Endothelial cell of umbilical vein (primary cell): ENCODE measurements at regions of chr1 and their contacts with region 1.

Region 1: GRCh38 chr1:178542560-178543356 is 29.8 kb downstream of the TEX35 start:
- DNase-seq: peak; percentile 89
- H3K4me3 ChIP-seq: peak overlapping the region; percentile 48 to 77 (median 53)
- H3K27ac ChIP-seq: no peak overlapping the region
- H3K4me1 ChIP-seq: peaks cover 11% of the 10 kb centered on the region
- H3K27me3 ChIP-seq: no peaks in the 10 kb centered on the region
- CTCF ChIP-seq: peak; percentile 83 to 89
- POLR2A ChIP-seq: no peak

Region 2: DNA sequence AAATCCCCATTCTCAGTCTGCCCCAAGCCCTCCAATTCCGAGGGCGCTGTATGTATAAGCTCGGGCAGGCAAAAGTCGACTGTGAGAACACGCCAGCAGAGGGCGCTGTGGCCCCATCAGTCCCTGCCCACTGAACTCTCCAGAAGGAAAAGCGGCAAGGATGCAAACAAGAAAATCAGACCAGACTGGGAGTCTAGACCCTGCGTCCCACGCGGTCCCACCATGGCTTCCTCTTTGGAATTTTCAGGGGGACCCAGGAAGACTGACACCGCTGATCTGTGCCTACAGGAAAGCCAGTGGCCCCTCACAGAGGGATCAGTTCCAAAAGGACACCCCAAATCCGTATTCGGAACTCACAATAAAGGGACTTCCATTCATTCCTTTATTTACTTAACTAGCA is 10.4 kb before region 1 on chr1:
- CTCF ChIA-PET with region 1: interaction called, 10 read pairs
- POLR2A ChIA-PET with region 1: no interaction called
- dilution Hi-C with region 1: no loop called
- intact Hi-C with region 1: no loop called
- DNase-seq: peak; percentile 82
- H3K4me3 ChIP-seq: no peak overlapping the region
- H3K27ac ChIP-seq: no peak overlapping the region
- H3K4me1 ChIP-seq: no peaks in the 10 kb centered on the region
- H3K27me3 ChIP-seq: no peaks in the 10 kb centered on the region
- CTCF ChIP-seq: peak; percentile 87 to 89
- POLR2A ChIP-seq: no peak

Region 3: DNA sequence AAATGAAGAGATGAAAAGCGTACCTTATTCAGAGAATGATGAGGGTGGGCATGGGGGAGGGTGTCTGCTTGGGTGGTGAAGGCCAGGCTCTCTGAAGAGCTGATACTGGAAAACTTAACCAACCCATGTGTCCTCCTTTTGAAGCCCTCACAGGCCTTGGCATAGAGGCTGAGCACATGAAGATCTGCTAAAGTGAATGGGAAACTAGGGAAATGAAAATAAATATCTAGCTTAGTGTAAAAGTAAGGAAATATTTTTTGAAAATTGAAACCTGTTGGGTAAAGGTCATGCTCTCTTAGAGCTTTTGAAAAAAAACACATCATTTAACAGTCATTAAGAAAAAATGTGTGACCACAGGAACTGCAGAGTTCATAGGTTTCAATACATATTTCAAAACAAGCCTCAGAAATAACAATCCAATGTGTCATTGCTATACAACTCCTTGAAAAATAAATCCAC is 141.8 kb after region 1 on chr1:
- CTCF ChIA-PET with region 1: interaction called, 5 read pairs
- POLR2A ChIA-PET with region 1: no interaction called
- dilution Hi-C with region 1: no loop called
- intact Hi-C with region 1: loop called (anchors 1 kb)
- DNase-seq: peak; percentile 93
- H3K4me3 ChIP-seq: no peak overlapping the region
- H3K27ac ChIP-seq: peak overlapping the region; percentile 98
- H3K4me1 ChIP-seq: peaks cover 43% of the 10 kb centered on the region
- H3K27me3 ChIP-seq: no peaks in the 10 kb centered on the region
- CTCF ChIP-seq: no peak
- POLR2A ChIP-seq: peak; percentile 47

Region 4: DNA sequence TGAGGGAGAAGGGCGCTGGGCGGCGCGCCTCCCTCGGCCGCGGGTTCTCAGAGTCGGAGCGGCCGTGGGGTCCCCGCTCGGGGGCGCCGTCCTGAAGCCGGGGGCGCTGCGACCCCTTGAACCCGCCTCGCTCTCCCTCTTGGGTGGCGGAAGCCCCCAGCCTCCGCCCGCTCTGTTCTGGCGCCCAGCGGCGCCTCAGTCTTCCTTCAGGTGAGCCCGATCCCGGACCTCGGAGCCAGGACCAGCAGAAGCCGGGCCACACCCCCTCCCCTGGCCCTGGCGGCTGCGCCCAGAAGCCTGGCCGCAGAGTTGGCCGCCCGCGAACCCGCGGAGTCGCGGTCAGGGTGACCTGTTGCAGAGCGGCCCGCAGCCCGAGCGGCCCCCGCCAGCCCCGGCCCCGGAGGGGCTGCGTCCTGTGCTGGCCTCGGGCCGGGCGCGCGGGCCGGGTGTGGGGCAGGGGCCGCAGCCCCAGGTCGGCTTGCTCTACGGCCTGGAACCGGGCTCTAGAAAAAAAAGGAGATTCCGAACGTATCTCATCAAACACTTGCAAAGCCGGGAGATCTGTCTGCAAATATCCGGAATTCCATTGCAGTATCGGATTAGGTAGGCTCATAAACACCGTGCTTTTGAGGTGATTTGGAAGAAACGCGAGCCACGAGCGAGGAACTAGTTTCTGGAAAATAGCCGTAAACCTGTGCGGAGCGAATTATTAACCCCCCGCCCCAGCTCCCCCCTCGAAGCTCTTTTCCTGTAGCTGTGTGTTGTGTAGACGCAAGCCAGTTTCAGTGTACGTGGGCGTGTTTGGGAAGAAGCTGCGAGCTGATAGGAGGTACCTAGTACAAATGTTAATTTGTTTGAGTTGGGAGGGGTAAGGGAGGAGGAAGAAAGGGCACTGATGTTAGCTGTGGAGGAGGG is 183.1 kb after region 1 on chr1:
- CTCF ChIA-PET with region 1: interaction called, 22 read pairs
- POLR2A ChIA-PET with region 1: no interaction called
- dilution Hi-C with region 1: no loop called
- intact Hi-C with region 1: loop called (anchors 1 kb)
- DNase-seq: peak; percentile 86
- H3K4me3 ChIP-seq: peak overlapping the region; percentile 68 to 94 (median 92)
- H3K27ac ChIP-seq: peak overlapping the region; percentile 68
- H3K4me1 ChIP-seq: peaks cover 28% of the 10 kb centered on the region
- H3K27me3 ChIP-seq: no peaks in the 10 kb centered on the region
- CTCF ChIP-seq: peak in 1 of 2 donors; percentile 25
- POLR2A ChIP-seq: peak; percentile 49

Region 5: DNA sequence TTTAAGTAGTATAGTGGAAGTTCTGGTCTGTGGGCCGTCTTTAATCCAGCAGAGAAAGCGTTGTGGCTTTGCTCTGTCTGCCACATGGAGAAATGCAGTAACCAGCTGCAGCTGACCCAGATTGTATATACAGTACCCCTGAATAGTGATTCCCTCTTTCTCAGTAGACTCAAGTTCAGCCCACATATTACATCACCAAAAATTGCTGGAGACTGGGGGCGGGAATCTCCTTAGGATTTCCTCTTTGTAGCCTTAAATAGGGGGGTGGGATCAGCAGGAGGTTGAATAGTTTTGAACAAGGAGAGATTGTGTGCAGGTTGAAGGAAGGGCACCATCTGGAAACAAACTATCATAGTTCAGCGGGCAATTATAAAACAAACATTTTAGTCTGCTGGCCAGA is 328.2 kb after region 1 on chr1 and contains the start of gene ANGPTL1:
- CTCF ChIA-PET with region 1: no interaction called
- POLR2A ChIA-PET with region 1: no interaction called
- dilution Hi-C with region 1: no loop called
- intact Hi-C with region 1: loop called (anchors 2 kb)
- DNase-seq: peak; percentile 71
- H3K4me3 ChIP-seq: no peak within 1 kb of the TSS
- H3K27ac ChIP-seq: no peak within 1 kb of the TSS
- H3K4me1 ChIP-seq: peaks cover 37% of the 10 kb centered on the region
- H3K27me3 ChIP-seq: no peaks in the 10 kb centered on the region
- CTCF ChIP-seq: no peak
- POLR2A ChIP-seq: no peak
- total RNA-seq, gene ANGPTL1: 0.51 TPM in 1 of 2 replicates, not detected in the other